Calu3 (cell line): ENCODE measurements at regions of chr10 and their contacts with region 1.

Region 1: DNA sequence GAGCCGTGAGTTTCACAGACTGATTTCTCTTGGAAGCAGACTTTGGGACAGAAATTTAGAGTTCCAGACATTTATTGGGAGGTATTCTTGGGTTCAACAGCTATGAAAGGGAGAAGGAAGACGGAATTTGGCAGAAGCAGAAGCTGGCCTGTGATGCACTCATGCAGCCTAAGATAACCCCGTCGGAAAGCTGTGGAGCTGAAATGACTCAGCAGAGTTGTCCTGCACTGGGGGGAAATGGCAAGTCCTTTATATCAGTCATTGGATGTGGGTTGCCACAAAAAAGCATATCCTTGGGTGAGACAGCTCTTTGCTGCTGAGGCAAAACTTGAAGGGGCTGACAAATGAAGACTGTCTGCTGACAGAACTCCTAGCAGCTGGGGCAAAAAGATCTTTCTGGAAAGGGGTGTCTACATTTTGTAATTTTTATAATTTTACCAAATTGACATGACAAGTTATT is 11.5 kb upstream of the MICU1 start:
- DNase-seq: peak; percentile 16
- H3K4me3 Mint-ChIP-seq: no peak overlapping the region
- H3K27ac Mint-ChIP-seq: peak overlapping the region; percentile 60
- H3K4me1 Mint-ChIP-seq: peaks cover 37% of the 10 kb centered on the region
- H3K27me3 Mint-ChIP-seq: no peaks in the 10 kb centered on the region
- CTCF ChIP-seq: no peak

Region 2: GRCh38 chr10:72649291-72649690 is 11.9 kb after region 1 on chr10:
- CTCF ChIA-PET with region 1: interaction called, 10 read pairs
- intact Hi-C with region 1: no loop called
- DNase-seq: no peak
- H3K4me3 Mint-ChIP-seq: no peak overlapping the region
- H3K27ac Mint-ChIP-seq: no peak overlapping the region
- H3K4me1 Mint-ChIP-seq: no peaks in the 10 kb centered on the region
- H3K27me3 Mint-ChIP-seq: no peaks in the 10 kb centered on the region
- CTCF ChIP-seq: no peak

Region 3: DNA sequence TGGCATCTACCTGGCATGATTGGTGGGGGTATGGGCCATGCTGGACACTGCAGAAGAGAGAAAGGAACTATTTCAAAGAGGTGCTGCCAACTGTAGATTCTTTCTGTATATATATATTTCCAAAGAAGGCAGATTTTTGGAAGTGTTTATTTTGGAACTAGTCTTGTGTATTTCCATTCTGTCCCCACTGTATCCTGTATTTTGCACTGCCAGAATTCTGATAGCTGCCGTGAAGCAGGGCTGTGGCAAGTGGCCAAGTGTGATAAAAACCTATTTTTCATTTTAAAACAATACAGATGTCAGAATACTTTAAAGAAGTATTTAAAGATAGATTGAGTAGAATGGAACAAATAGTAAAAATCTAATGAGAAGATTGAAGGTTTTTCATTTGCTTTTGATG is 71.6 kb after region 1 on chr10:
- CTCF ChIA-PET with region 1: interaction called, 13 read pairs
- intact Hi-C with region 1: no loop called
- DNase-seq: no peak
- H3K4me3 Mint-ChIP-seq: no peak overlapping the region
- H3K27ac Mint-ChIP-seq: no peak overlapping the region
- H3K4me1 Mint-ChIP-seq: peaks cover 30% of the 10 kb centered on the region
- H3K27me3 Mint-ChIP-seq: no peaks in the 10 kb centered on the region
- CTCF ChIP-seq: no peak

Region 4: DNA sequence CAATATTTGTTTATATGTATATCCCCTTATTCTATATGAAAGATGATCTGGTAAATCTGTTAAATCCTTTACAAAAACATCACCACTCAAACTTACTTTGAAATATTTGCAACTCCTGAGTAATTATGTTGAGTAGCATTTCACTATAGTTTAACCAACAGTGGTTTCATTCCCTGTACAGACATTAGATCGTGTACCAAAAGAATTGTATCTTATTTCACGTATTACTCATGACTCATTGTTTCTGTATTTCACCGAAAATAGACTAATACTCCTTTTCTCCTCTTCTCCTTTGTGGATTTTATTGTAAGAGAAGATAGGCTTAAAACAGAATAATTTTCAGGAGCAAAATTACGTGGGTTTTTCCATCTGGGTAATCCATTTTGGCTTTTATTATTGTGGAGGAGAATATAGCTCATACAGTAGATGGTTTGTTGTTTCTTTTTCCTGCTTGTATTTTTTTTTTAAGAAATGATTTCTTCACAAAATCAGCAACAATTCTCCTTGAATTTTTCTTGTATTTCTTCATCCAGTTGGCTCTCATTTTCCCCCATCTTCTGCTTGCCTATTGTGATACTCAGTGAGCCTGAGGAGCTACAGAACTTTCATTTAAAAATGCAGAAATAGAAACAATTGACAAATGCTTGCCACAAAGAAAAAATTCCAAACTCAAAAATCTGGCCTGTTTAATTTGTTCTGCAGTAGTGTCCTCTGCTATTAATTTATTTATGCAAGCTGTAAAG is 165.5 kb after region 1 on chr10:
- CTCF ChIA-PET with region 1: no interaction called
- intact Hi-C with region 1: no loop called
- DNase-seq: no peak
- H3K4me3 Mint-ChIP-seq: peak overlapping the region; percentile 28
- H3K27ac Mint-ChIP-seq: peak overlapping the region; percentile 84
- H3K4me1 Mint-ChIP-seq: peaks cover 51% of the 10 kb centered on the region
- H3K27me3 Mint-ChIP-seq: no peaks in the 10 kb centered on the region
- CTCF ChIP-seq: no peak